Activated CD4-positive, alpha-beta memory T cell treated with anti-CD3 and anti-CD28 coated beads for 36 hours (primary cell): ENCODE measurements at regions of chr3 and their contacts with region 1.

Region 1: GRCh38 chr3:51941798-51942602 is at the starts of genes PARP3 and RRP9:
- DNase-seq: peak; percentile 100
- H3K4me3 Mint-ChIP-seq: peak within 1 kb of the TSS; percentile 87
- H3K27ac Mint-ChIP-seq: peak within 1 kb of the TSS; percentile 83
- H3K4me1 Mint-ChIP-seq: peaks cover 29% of the 10 kb centered on the region
- H3K27me3 Mint-ChIP-seq: no peaks in the 10 kb centered on the region
- total RNA-seq, gene PARP3: 12.1 to 13.4 TPM
- total RNA-seq, gene RRP9: 32.3 to 35.4 TPM

Region 2: DNA sequence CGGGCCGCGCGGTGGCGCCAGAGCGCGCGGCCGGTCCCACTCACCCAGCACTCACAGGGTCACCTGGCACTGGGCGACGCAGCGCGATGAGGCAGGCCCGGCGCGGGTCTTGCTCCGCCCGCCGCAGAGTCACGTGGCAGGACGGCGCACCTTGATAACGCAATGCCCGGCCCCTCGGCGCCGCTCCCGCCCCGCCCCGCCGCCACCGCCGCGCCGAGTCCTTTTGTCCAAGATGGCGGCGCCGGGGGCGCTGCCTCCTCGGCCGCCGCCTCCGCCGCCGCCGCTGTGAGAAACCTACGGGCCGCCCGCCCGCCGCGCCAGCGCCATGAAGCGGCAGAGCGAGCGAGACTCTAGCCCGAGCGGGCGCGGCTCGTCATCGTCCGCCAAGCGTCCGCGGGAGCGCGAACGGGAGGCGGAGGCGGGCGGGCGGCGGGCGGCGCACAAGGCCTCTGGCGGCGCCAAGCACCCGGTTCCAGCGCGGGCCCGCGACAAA is 550.9 kb before region 1 on chr3 and contains the start of gene RBM15B:
- CTCF ChIA-PET with region 1: no interaction called
- POLR2A ChIA-PET with region 1: no interaction called
- intact Hi-C with region 1: loop called (anchors 1 kb)
- DNase-seq: peak; percentile 98
- H3K4me3 Mint-ChIP-seq: peak within 1 kb of the TSS; percentile 86
- H3K27ac Mint-ChIP-seq: peak within 1 kb of the TSS; percentile 87
- H3K4me1 Mint-ChIP-seq: peaks cover 81% of the 10 kb centered on the region
- H3K27me3 Mint-ChIP-seq: no peaks in the 10 kb centered on the region
- total RNA-seq, gene RBM15B: 19.0 to 19.4 TPM

Region 3: DNA sequence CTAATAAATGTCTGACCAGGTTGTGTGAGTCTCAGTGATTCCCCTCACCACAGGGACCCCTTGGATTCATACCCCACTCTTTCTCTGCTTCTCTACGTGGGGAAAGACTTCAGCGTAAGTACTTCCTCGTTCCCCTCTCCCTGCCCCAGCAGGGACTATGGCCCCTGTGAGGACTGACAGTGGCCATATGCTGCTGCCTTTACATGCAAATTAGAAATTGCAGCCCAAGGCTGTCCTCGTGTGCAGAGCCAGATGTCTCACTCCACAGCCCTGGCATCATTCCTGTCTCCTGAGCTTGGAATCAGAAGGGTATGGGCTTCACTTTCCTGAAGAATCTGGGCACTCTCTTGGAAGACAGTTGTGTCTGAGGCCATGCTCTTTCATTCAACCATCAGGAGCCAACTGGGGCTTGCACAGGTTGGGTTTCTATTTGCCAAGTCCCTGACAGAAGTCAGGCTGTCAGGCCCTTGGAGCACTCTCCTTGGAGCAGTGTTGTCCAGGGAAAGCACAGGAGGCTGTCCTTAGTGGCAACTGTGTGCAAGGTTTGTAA is 111.1 kb before region 1 on chr3:
- CTCF ChIA-PET with region 1: no interaction called
- POLR2A ChIA-PET with region 1: no interaction called
- intact Hi-C with region 1: no loop called
- DNase-seq: no peak
- H3K4me3 Mint-ChIP-seq: no peak overlapping the region
- H3K27ac Mint-ChIP-seq: no peak overlapping the region
- H3K4me1 Mint-ChIP-seq: no peaks in the 10 kb centered on the region
- H3K27me3 Mint-ChIP-seq: peaks cover 18% of the 10 kb centered on the region

Region 4: GRCh38 chr3:51967384-51968169 is 25.6 kb after region 1 on chr3 and contains the start of gene PCBP4:
- CTCF ChIA-PET with region 1: interaction called, 64 read pairs
- POLR2A ChIA-PET with region 1: interaction called, 3 read pairs
- intact Hi-C with region 1: no loop called
- DNase-seq: peak; percentile 45
- H3K4me3 Mint-ChIP-seq: peak within 1 kb of the TSS; percentile 81
- H3K27ac Mint-ChIP-seq: peak within 1 kb of the TSS; percentile 45
- H3K4me1 Mint-ChIP-seq: peaks cover 23% of the 10 kb centered on the region
- H3K27me3 Mint-ChIP-seq: no peaks in the 10 kb centered on the region
- total RNA-seq, gene PCBP4: 17.3 to 19.3 TPM

Region 5: GRCh38 chr3:51982782-51983577 is 41.0 kb after region 1 on chr3 and contains the start of gene ACY1:
- CTCF ChIA-PET with region 1: interaction called, 26 read pairs
- POLR2A ChIA-PET with region 1: interaction called, 10 read pairs
- intact Hi-C with region 1: no loop called
- DNase-seq: peak; percentile 85
- H3K4me3 Mint-ChIP-seq: peak within 1 kb of the TSS; percentile 88
- H3K27ac Mint-ChIP-seq: peak within 1 kb of the TSS; percentile 88
- H3K4me1 Mint-ChIP-seq: peaks cover 28% of the 10 kb centered on the region
- H3K27me3 Mint-ChIP-seq: no peaks in the 10 kb centered on the region
- total RNA-seq, gene ACY1: 53.1 to 59.2 TPM

Region 6: DNA sequence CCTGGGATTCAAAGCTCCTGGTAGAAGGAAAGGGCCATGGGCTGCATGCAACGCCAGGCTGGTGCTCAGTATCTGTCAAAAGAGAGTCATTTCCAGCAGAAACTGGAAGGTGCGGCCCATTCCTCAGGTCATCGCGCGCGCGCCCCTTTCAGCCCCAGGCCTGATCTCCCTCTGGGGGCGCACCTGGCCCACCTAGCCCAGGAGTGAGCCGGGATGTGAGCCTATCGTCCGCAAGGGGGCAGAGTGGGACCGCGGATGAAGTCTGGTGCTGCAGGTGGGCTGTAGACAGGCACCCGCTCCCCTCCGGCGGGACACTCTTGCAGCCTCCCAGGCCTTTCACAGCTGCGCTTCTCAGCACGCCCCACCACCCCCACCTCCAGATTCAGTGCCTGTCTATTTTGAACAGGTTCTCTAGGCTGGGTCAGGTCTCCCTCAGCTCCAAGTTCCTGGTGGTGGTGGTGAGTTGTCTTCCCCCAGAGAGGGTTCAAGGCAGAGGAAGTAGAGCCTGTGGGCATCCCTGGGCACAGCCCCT is 59.5 kb after region 1 on chr3:
- CTCF ChIA-PET with region 1: interaction called, 12 read pairs
- POLR2A ChIA-PET with region 1: no interaction called
- intact Hi-C with region 1: loop called (anchors 1 kb)
- DNase-seq: peak; percentile 90
- H3K4me3 Mint-ChIP-seq: no peak overlapping the region
- H3K27ac Mint-ChIP-seq: no peak overlapping the region
- H3K4me1 Mint-ChIP-seq: peaks cover 14% of the 10 kb centered on the region
- H3K27me3 Mint-ChIP-seq: no peaks in the 10 kb centered on the region

Region 7: GRCh38 chr3:52070724-52071621 is 129.0 kb after region 1 on chr3:
- CTCF ChIA-PET with region 1: no interaction called
- POLR2A ChIA-PET with region 1: no interaction called
- intact Hi-C with region 1: no loop called
- DNase-seq: no peak
- H3K4me3 Mint-ChIP-seq: no peak overlapping the region
- H3K27ac Mint-ChIP-seq: no peak overlapping the region
- H3K4me1 Mint-ChIP-seq: no peaks in the 10 kb centered on the region
- H3K27me3 Mint-ChIP-seq: no peaks in the 10 kb centered on the region

Region 8: DNA sequence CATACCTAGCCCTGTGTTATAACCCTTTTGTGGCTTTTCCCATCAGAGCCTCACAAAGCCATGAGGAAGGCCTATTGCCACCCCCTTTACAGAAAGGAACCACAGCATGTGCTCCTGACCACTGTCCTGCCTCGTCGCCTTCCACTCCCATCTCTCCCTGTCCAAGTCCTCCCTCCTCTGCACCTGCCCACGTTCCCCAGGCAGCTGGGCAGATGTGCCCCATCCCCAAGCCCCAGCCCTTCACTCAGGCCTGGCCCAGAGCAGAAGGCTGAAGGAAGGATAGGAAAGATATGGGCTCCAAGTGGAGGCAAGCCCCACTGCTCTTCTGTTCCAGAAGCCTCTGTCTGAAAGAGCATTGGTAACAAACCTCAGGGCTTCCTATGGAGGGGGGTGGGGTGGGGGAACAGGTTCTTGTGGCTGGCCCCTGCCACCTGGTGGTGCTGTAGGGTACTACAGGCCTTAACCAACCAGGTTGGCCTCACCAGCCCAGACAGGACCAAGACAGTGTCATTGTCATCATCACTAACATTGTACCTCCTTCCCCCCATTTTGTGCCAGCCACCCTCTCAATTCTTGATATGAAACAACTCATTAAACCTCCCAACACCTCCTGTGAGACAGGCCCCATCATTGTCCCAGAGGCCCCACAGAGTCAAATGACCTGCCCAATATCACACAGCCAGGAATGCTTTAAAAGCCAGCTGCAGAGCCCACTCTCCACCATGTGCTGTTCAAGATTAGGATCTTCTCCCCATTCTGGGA is 202.2 kb after region 1 on chr3:
- CTCF ChIA-PET with region 1: interaction called, 3 read pairs
- POLR2A ChIA-PET with region 1: no interaction called
- intact Hi-C with region 1: loop called (anchors 1 kb)
- DNase-seq: peak; percentile 87
- H3K4me3 Mint-ChIP-seq: no peak overlapping the region
- H3K27ac Mint-ChIP-seq: no peak overlapping the region
- H3K4me1 Mint-ChIP-seq: peaks cover 6% of the 10 kb centered on the region
- H3K27me3 Mint-ChIP-seq: no peaks in the 10 kb centered on the region